ENCODE measurements at regions of chr11 and their contacts with region 1.

Region 1: DNA sequence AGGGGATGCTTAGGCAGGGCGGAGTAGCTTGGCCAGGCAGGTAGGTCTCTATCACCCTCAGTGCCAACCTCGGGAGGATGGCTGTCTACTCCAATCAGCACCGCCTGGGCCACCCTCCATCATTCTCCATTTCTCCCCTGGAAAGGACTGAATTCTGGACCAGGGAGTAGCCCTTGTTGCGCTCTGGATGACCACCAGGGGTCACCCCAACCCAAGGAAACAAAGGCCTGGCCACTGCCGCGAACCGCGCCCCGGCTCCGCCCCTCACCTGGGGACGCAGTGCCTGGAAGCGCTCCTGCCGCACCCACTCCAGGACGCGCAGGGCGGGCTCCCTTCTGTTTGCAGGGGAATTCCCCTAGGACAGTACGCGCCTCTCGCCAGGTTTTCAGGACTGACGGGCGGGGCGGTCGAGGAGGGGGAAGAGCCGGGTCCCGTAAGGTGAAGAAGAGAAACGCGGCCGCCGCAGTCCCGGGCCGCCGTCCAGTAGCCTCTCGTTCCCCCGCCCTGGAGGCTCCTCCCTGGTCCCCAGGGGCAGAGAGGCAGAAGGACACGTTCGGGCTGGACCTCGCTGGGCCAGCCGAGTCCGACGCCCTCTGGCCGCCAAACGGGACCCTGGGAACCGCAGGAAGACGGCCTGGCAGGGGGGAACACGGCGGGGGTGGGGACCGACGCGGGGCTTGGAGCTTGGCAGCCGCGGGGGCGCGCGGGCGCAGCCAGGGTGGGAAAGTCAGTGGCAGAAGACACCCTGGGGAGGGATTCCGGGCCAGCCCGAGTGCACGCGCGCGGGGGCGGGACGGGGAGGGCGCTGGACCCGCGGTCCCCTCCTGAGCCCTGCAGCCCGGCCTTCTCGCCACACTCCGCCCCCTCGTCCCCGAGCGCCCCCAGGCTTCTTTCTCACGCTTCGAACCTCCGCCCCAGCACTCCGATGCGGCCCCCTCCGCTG is 7.1 kb downstream of the SCN4B start:
- DNase-seq: peak; percentile 97
- H3K4me3 Mint-ChIP-seq: peak overlapping the region; percentile 86
- H3K27ac Mint-ChIP-seq: peak overlapping the region; percentile 38
- H3K4me1 Mint-ChIP-seq: peaks cover 19% of the 10 kb centered on the region
- H3K27me3 Mint-ChIP-seq: peaks cover 73% of the 10 kb centered on the region

Region 2: DNA sequence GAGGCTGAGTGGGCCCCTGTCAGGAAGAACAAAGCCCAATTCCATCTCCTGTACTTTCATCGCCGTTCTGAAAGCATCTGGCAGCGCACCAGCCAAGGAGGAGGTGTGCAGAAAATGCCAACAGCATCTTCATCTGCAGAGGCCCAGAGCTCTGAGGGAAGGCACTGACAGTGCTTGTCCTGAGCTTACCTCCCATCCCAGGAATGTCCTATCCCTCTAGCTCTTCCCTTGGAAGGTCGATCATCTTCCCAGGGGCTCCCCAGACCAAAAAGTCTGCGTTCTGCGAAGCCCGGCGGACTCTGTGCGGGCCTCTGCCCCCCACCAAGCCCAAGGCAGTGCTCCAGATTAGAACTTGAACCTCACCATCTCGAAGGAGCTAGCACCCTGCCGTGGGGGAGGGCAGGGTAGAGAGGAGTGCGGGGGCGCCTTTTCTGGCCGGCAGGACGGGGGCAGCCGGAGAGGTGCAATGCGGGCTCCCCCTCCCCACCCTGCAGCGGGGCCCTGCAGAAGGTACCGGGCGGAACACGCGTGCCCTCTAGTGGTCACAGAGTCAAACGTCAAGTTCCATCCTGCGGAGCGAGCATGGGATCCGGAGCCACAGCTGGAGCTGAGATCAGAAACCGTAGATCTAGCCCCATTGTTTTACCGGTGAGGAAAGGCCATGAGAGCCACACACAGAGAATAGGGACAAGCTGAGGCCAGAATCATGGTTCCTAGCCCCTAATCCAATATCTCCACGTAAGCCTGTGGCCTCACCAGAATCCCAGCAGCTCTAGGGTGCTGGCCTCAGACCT is 25.9 kb after region 1 on chr11:
- intact Hi-C with region 1: loop called (anchors 1 kb)
- DNase-seq: peak; percentile 92
- H3K4me3 Mint-ChIP-seq: peak overlapping the region; percentile 12
- H3K27ac Mint-ChIP-seq: no peak overlapping the region
- H3K4me1 Mint-ChIP-seq: peaks cover 8% of the 10 kb centered on the region
- H3K27me3 Mint-ChIP-seq: peaks cover 20% of the 10 kb centered on the region

Region 3: GRCh38 chr11:118184784-118185579 is 39.4 kb after region 1 on chr11:
- intact Hi-C with region 1: no loop called
- DNase-seq: no peak
- H3K4me3 Mint-ChIP-seq: no peak overlapping the region
- H3K27ac Mint-ChIP-seq: no peak overlapping the region
- H3K4me1 Mint-ChIP-seq: peaks cover 3% of the 10 kb centered on the region
- H3K27me3 Mint-ChIP-seq: peaks cover 39% of the 10 kb centered on the region

Region 4: GRCh38 chr11:118290923-118291322 is 145.4 kb after region 1 on chr11:
- intact Hi-C with region 1: loop called (anchors 1 kb)
- DNase-seq: peak; percentile 87
- H3K4me3 Mint-ChIP-seq: no peak overlapping the region
- H3K27ac Mint-ChIP-seq: peak overlapping the region; percentile 1
- H3K4me1 Mint-ChIP-seq: peaks cover 23% of the 10 kb centered on the region
- H3K27me3 Mint-ChIP-seq: peaks cover 2% of the 10 kb centered on the region

Region 5: DNA sequence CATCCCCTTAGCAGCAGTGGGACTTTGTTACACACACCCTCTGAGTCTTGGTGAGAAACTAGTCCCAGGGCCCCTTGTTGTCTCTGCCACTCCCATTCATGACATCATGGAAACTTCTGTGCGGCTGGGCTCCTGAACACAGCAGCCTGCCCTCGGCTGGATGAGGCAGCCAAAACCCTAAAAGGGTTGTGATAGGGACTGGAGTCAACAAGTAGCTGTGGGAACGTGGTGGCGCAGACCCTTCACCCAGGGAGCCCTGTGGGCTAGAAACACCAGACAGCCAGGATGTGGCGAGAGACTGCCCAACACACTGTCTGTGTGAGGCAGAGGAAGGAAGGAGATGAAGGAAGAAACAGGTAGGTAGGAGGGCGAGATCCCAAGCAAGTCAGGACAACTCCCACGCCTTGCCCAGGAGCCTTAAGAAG is 193.1 kb after region 1 on chr11:
- intact Hi-C with region 1: loop called (anchors 5 kb)
- DNase-seq: peak; percentile 97
- H3K4me3 Mint-ChIP-seq: peak overlapping the region; percentile 90
- H3K27ac Mint-ChIP-seq: peak overlapping the region; percentile 100
- H3K4me1 Mint-ChIP-seq: peaks cover 65% of the 10 kb centered on the region
- H3K27me3 Mint-ChIP-seq: no peaks in the 10 kb centered on the region

Region 6: GRCh38 chr11:118488480-118489109 is 343.0 kb after region 1 on chr11:
- intact Hi-C with region 1: loop called (anchors 2 kb)
- DNase-seq: peak; percentile 93
- H3K4me3 Mint-ChIP-seq: no peak overlapping the region
- H3K27ac Mint-ChIP-seq: peak overlapping the region; percentile 3
- H3K4me1 Mint-ChIP-seq: peaks cover 10% of the 10 kb centered on the region
- H3K27me3 Mint-ChIP-seq: no peaks in the 10 kb centered on the region

Region 7: DNA sequence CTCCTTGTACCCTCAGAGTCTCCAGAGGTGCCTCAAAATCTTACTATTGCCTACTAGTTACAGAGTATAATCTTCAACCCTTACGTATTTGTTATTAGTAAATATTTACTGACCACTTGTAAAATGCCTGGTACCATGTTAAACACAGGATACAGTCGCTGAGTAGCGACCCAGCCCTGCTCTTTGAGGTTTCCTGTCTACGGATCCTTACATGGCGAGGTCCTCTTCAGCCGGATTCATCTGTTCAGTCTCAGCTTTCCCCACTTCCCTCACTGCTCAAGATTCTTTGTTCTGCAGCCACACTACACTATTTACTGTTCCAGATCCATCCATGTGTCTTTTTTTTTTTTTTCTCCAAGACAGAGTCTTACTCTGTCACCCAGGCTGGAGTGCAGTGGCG is 368.5 kb after region 1 on chr11:
- intact Hi-C with region 1: no loop called
- DNase-seq: peak; percentile 63
- H3K4me3 Mint-ChIP-seq: no peak overlapping the region
- H3K27ac Mint-ChIP-seq: peak overlapping the region; percentile 30
- H3K4me1 Mint-ChIP-seq: peaks cover 8% of the 10 kb centered on the region
- H3K27me3 Mint-ChIP-seq: no peaks in the 10 kb centered on the region

Region 8: GRCh38 chr11:118572061-118572980 is 426.8 kb after region 1 on chr11 and contains the start of gene ARCN1:
- intact Hi-C with region 1: loop called (anchors 2 kb)
- DNase-seq: peak; percentile 93
- H3K4me3 Mint-ChIP-seq: peak within 1 kb of the TSS; percentile 97
- H3K27ac Mint-ChIP-seq: peak within 1 kb of the TSS; percentile 93
- H3K4me1 Mint-ChIP-seq: peaks cover 34% of the 10 kb centered on the region
- H3K27me3 Mint-ChIP-seq: no peaks in the 10 kb centered on the region
- total RNA-seq, gene ARCN1: 147 and 150 TPM in 2 replicates

Region 9: GRCh38 chr11:118610804-118611795 is 465.5 kb after region 1 on chr11:
- intact Hi-C with region 1: loop called (anchors 1 kb)
- DNase-seq: peak; percentile 96
- H3K4me3 Mint-ChIP-seq: peak overlapping the region; percentile 76
- H3K27ac Mint-ChIP-seq: peak overlapping the region; percentile 17
- H3K4me1 Mint-ChIP-seq: peaks cover 25% of the 10 kb centered on the region
- H3K27me3 Mint-ChIP-seq: peaks cover 36% of the 10 kb centered on the region